Uterus (tissue), 4 donors: ENCODE measurements at regions of chr21 and their contacts with region 1.

Region 1: GRCh38 chr21:38355992-38356797 is 99.4 kb downstream of the KCNJ15 start:
- DNase-seq: peak; percentile 63 to 65
- H3K4me3 ChIP-seq: no peak overlapping the region
- H3K27ac ChIP-seq: no peak overlapping the region
- H3K4me1 ChIP-seq: no peaks in the 10 kb centered on the region
- H3K27me3 ChIP-seq: no peaks in the 10 kb centered on the region
- CTCF ChIP-seq: peak; percentile 82 to 95 (median 90)
- POLR2A ChIP-seq: no peak

Region 2: DNA sequence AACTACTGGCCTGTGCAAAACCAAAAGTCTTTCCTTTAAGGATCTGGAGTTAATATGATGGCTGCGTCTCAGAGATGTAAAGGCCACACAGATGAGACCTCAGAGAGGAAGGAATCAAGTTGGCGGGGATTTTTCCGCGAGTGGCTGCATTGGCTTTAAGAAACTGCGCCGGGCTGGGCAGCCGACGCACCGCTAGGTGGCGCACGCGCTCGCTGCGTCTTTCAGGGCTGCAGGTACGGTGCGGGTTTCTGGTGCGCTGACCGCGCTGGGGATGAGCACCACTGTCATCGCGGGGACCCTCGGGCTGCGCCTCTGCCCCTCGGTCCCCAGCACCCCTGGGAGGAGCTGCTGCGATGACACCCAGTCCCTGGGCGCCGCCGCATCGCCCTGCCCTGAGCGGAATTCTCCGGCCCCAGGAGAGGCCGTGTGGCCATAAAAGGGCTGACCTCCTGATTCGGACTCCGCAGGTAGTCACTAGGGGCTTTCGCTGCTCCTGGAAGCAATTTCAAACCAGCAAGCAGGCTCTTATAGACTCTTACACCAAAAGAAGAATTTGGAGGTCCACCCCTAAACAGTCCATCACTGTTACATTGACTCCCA is 680.9 kb before region 1 on chr21:
- intact Hi-C with region 1: loop called (anchors 10 kb)
- DNase-seq: peak; percentile 60 to 62
- H3K4me3 ChIP-seq: no peak overlapping the region
- H3K27ac ChIP-seq: no peak overlapping the region
- H3K4me1 ChIP-seq: peaks cover 0 to 4% of the 10 kb centered on the region in 2 donors
- H3K27me3 ChIP-seq: no peaks in the 10 kb centered on the region
- CTCF ChIP-seq: peak; percentile 70 to 95 (median 85)
- POLR2A ChIP-seq: no peak

Region 3: DNA sequence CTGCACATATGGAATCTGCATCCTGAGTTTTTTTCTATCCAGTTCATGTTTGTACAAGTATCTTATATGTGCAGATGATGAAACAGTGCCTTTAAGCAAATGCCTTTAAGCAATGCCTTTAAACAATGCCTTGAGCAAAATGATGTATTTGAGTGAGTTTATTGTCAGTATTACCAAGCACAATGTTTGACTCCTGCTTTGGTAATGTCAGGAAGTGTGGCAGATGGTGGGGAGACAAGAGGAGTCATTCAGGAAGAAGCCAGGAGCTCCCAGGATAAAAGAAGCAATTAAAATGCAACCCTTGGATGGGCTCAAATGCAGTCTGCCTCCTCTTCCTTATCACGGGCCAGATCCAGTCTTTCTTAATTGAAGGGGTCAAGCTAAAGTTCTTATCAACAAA is 208.1 kb before region 1 on chr21:
- intact Hi-C with region 1: no loop called
- DNase-seq: no peak
- H3K4me3 ChIP-seq: no peak overlapping the region
- H3K27ac ChIP-seq: no peak overlapping the region
- H3K4me1 ChIP-seq: no peaks in the 10 kb centered on the region
- H3K27me3 ChIP-seq: no peaks in the 10 kb centered on the region
- CTCF ChIP-seq: no peak
- POLR2A ChIP-seq: no peak

Region 4: DNA sequence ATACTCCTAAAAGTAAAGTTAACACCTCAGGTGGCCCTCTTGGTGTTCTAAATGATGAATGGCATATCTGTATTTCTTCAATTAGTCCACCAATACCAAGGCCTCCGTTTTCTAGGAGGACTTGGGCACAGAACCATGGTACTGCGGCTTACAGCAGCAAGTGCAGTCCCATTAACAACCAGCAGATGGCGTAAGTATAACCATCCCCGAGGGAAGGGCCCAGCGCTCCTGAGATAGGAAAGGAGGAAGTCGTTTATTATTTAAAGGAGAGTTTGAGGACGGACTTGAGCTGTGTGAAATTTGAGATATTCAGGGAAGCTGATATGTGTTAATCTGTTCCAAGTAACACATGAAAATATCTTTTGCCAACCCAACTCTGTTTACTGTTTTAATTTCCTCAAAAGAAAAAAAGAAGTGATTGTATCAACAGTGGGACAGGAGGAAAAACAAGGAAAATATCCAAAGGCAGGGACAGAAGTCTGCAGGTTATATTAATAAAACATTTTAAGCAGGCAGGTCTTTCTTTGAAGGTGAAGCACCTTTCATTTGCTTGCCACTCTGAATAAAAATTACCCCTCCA is 137.1 kb before region 1 on chr21:
- intact Hi-C with region 1: loop called (anchors 5 kb)
- DNase-seq: peak; percentile 40 to 62
- H3K4me3 ChIP-seq: no peak overlapping the region
- H3K27ac ChIP-seq: no peak overlapping the region
- H3K4me1 ChIP-seq: no peaks in the 10 kb centered on the region
- H3K27me3 ChIP-seq: no peaks in the 10 kb centered on the region
- CTCF ChIP-seq: peak; percentile 79 to 90 (median 82)
- POLR2A ChIP-seq: no peak

Region 5: DNA sequence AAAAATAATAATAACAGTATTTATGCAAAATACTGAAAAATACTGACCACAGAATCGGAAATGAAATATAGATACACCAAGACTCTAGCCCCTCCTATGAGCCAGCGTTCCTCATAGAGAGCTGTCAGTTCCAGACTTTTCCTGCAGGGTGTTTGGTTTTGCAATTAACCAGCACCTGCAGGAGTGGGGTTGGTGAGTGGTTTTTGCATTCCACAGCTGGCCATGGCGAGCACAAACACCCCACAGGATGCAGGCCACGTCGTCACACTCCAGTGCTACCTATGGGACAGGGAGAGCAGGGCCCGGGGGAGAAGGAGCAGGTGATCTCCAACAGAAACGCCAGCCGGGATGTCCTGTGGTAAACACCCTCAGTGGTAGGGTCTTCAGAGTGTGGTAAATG is 48.0 kb after region 1 on chr21:
- intact Hi-C with region 1: no loop called
- DNase-seq: no peak
- H3K4me3 ChIP-seq: no peak overlapping the region
- H3K27ac ChIP-seq: no peak overlapping the region
- H3K4me1 ChIP-seq: no peaks in the 10 kb centered on the region
- H3K27me3 ChIP-seq: no peaks in the 10 kb centered on the region
- CTCF ChIP-seq: no peak
- POLR2A ChIP-seq: no peak

Region 6: DNA sequence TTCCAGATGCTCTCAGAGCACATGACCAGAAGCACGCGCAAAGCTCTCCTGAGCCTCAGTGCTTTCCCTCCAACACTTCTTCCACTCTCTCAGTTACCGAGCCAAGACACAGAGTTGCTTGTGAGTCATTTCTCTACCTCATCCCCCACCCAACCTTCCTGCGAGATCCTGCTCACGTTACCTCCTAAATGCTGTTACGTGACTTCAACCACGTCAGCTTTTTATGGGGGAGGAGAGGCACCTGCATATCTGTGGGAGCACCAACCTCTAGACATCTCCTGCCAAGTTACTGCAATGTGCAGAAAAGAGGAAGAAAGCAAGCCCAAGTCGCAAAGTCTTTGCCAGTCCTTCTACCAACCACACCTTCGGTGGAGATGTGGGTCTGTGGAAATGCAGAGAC is 169.3 kb after region 1 on chr21:
- intact Hi-C with region 1: no loop called
- DNase-seq: no peak
- H3K4me3 ChIP-seq: no peak overlapping the region
- H3K27ac ChIP-seq: no peak overlapping the region
- H3K4me1 ChIP-seq: no peaks in the 10 kb centered on the region
- H3K27me3 ChIP-seq: no peaks in the 10 kb centered on the region
- CTCF ChIP-seq: no peak
- POLR2A ChIP-seq: no peak

Region 7: DNA sequence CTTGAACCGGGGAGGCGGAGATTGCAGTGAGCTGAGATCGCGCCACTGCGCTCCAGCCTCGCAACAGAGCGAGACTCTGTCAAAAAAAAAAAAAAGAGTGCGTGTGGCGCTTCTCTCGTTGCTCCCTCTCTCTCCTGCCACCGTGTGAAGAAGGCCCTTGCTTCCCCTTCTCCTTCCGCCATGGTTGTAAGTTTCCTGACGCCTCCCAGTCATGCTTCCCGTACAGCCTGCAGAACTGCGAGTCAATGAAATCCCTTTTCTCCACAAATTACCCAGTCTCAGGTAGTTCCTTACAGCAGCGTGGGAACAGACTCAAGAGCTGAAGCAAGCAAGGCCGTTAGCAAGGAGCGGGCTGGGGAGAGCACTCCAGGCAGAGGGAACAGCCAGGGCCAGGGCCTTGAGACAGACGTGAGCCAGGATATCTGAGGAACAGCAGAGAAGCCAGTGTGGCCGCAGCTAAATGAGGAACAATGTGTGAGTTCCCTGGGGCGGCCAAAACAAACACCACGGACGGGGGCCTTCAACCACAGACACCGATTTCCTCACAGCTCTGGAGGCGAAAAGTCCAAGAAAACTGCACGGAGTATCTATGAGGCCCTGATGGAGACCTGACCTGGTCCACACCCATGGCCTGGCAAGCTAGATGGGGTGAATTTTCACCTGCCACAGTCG is 395.3 kb after region 1 on chr21:
- intact Hi-C with region 1: no loop called
- DNase-seq: no peak
- H3K4me3 ChIP-seq: no peak overlapping the region
- H3K27ac ChIP-seq: no peak overlapping the region
- H3K4me1 ChIP-seq: no peaks in the 10 kb centered on the region
- H3K27me3 ChIP-seq: no peaks in the 10 kb centered on the region
- CTCF ChIP-seq: no peak
- POLR2A ChIP-seq: no peak